Motor neuron (in vitro differentiated cells): ENCODE measurements at regions of chr3 and their contacts with region 1.

Region 1: DNA sequence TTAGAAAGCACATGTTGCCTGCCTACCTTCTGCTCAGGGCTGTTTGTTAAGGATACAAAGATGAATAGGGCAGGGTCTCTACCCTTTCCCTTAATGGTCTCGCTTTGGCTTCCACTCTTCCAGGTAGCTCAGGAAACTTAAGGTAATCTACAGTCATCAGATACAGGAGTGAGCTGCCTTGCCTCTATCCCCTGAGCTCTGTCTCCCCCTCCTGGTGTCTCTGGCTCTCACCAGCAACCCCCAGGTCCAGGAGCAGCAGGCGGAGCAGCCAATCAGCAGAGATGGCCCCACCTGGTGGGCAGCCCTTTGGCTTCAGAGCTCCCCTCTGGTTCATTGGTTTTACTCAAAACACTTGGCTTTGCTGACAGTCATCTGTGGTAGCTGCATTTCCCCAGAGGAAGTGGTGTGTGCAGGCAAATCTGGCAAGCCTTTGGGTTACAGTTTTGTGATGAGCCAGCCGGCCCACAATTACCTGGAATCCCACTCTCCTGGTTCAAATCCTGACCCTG is 8.5 kb upstream of the CX3CR1 start:
- ATAC-seq: peak; percentile 91 to 100 (median 100)
- H3K4me3 ChIP-seq: no peak overlapping the region
- H3K27ac ChIP-seq: no peak overlapping the region
- H3K4me1 ChIP-seq: no peaks in the 10 kb centered on the region

Region 2: GRCh38 chr3:38468782-38469181 is 819.6 kb before region 1 on chr3:
- in situ Hi-C with region 1: no loop called
- ATAC-seq: no peak
- H3K4me3 ChIP-seq: no peak overlapping the region
- H3K27ac ChIP-seq: no peak overlapping the region
- H3K4me1 ChIP-seq: no peaks in the 10 kb centered on the region

Region 3: GRCh38 chr3:39107388-39108199 is 180.8 kb before region 1 on chr3 and contains the starts of genes GORASP1 and TTC21A:
- in situ Hi-C with region 1: loop called in 2 of 9 experiments (anchors 10 to 25 kb)
- ATAC-seq: peak; percentile 78 to 92 (median 91)
- H3K4me3 ChIP-seq: peak within 1 kb of the TSS; percentile 68 to 99 (median 89)
- H3K27ac ChIP-seq: peak within 1 kb of the TSS; percentile 59 to 77
- H3K4me1 ChIP-seq: peaks cover 11 to 14% of the 10 kb centered on the region in 2 donors
- total RNA-seq, gene GORASP1: 25.9 to 67.3 (median 38.2) TPM
- total RNA-seq, gene TTC21A: 1.6 to 7.7 (median 5.1) TPM

Region 4: GRCh38 chr3:39126532-39127071 is 161.8 kb before region 1 on chr3:
- in situ Hi-C with region 1: loop called in 2 of 9 experiments (anchors 10 to 25 kb)
- ATAC-seq: peak in 6 of 8 experiments; percentile 36 to 79 (median 60)
- H3K4me3 ChIP-seq: no peak overlapping the region
- H3K27ac ChIP-seq: no peak overlapping the region
- H3K4me1 ChIP-seq: peaks cover 0 to 3% of the 10 kb centered on the region in 2 donors

Region 5: DNA sequence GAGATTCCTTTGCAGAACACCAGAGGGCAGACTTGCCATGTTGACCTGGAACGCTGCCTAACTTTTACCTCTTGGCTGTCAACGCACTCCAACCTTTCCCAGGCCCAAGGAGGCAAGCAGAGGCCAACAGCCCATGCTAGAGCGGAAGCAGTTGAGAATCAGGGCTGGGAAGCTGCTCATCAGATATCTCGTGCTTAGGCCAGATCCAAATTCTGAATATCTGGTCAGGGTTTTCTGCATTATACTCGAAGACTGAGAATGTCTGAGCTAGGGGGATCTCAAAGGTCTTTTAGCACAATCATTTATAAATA is 98.4 kb before region 1 on chr3:
- in situ Hi-C with region 1: loop called in 1 of 9 experiments (anchors 10 kb)
- ATAC-seq: peak; percentile 44 to 89 (median 72)
- H3K4me3 ChIP-seq: no peak overlapping the region
- H3K27ac ChIP-seq: no peak overlapping the region
- H3K4me1 ChIP-seq: no peaks in the 10 kb centered on the region

Region 6: GRCh38 chr3:39819899-39820298 is 531.5 kb after region 1 on chr3:
- in situ Hi-C with region 1: no loop called
- ATAC-seq: no peak
- H3K4me3 ChIP-seq: no peak overlapping the region
- H3K27ac ChIP-seq: no peak overlapping the region
- H3K4me1 ChIP-seq: no peaks in the 10 kb centered on the region